ENCODE measurements at regions of chr1 and their contacts with region 1.

Region 1: DNA sequence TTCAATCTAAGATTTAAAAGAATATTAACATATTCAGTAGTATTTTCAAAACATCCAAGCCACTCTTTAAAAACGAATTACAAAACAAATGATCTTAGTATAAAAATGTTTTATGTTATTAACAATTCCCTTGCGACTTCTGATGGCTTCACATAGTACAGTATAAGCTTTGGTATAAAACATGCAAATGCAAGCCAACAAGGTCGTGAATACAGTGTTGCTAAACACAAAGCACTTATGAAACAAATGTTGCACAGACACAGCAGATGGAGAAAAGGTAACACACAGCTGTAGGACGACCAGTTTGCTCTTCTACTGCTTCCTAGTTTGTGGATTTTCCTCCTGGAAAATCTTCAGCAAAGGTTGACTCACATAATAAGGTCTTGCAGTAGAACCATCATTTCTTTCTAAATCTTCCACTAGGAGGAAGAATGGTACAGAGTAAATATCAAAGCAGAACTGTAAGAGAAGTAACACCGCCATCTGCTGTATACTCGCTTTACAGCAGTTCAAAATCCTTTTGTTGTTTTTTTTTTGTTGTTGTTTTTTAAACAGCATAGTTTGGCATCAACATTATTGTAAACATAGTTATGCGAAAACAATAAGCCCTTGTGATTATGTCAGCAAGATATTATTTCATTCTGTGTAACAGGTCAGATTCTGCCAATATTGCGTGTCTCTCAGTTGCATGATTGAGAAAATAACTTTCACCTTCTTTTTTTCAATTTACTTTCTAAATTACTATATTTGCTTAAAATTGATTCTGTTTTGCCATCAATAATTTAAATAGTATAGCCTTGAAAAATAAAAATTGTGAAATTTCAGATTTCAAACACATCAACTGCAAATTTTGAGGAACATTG is 69.5 kb downstream of the LHX8 start:
- DNase-seq: peak; percentile 6
- H3K4me3 Mint-ChIP-seq: no peak overlapping the region
- H3K27ac Mint-ChIP-seq: no peak overlapping the region
- H3K4me1 Mint-ChIP-seq: no peaks in the 10 kb centered on the region
- H3K27me3 Mint-ChIP-seq: no peaks in the 10 kb centered on the region
- CTCF ChIP-seq: peak; percentile 67

Region 2: GRCh38 chr1:74771913-74772515 is 431.6 kb before region 1 on chr1:
- CTCF ChIA-PET with region 1: interaction called, 11 read pairs
- intact Hi-C with region 1: loop called (anchors 1 kb)
- DNase-seq: peak; percentile 44
- H3K4me3 Mint-ChIP-seq: no peak overlapping the region
- H3K27ac Mint-ChIP-seq: no peak overlapping the region
- H3K4me1 Mint-ChIP-seq: no peaks in the 10 kb centered on the region
- H3K27me3 Mint-ChIP-seq: no peaks in the 10 kb centered on the region
- CTCF ChIP-seq: peak; percentile 53

Region 3: GRCh38 chr1:74964508-74965102 is 239.0 kb before region 1 on chr1:
- CTCF ChIA-PET with region 1: no interaction called
- intact Hi-C with region 1: loop called (anchors 10 kb)
- DNase-seq: peak; percentile 46
- H3K4me3 Mint-ChIP-seq: no peak overlapping the region
- H3K27ac Mint-ChIP-seq: no peak overlapping the region
- H3K4me1 Mint-ChIP-seq: no peaks in the 10 kb centered on the region
- H3K27me3 Mint-ChIP-seq: no peaks in the 10 kb centered on the region
- CTCF ChIP-seq: no peak

Region 4: DNA sequence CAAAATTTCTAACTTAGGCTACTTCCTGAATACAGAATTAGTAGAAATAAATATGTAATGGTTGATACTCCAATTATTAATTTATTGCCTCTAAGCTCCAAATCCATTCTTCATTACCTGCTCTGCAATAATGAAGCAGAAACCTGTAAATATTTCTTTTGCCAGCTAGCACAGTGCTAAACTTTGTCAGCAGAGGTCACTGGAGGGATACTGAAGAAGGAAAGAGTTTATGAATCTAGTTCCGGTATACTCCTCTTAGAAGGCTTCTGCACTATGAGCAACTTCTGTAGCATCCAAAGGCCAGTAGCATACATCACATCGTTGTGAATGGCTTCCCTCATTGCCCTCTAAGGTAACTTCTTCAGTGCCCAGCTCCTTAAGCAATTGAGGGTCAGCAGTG is 150.4 kb before region 1 on chr1:
- CTCF ChIA-PET with region 1: no interaction called
- intact Hi-C with region 1: loop called (anchors 1 kb)
- DNase-seq: no peak
- H3K4me3 Mint-ChIP-seq: no peak overlapping the region
- H3K27ac Mint-ChIP-seq: no peak overlapping the region
- H3K4me1 Mint-ChIP-seq: no peaks in the 10 kb centered on the region
- H3K27me3 Mint-ChIP-seq: no peaks in the 10 kb centered on the region
- CTCF ChIP-seq: no peak

Region 5: DNA sequence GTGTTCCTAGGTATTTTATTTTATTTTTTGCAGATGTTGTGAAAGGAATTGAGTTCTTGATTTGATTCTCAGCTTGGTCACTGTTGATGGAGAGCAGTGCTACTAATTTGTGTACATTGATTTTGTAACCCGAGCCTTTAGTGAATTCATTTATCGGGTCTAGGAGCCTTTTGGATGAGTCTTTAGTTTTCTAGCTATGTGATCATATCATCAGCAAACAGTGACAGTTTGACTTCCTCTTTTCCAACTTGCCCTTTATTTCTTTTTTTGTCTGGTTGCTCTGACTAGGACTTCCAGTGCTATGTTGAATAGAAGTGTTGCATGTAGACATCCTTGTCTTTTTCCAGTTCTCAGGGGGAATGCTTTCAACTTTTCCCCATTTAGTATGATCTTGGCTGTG is 69.5 kb after region 1 on chr1:
- CTCF ChIA-PET with region 1: no interaction called
- intact Hi-C with region 1: no loop called
- DNase-seq: no peak
- H3K4me3 Mint-ChIP-seq: no peak overlapping the region
- H3K27ac Mint-ChIP-seq: no peak overlapping the region
- H3K4me1 Mint-ChIP-seq: no peaks in the 10 kb centered on the region
- H3K27me3 Mint-ChIP-seq: no peaks in the 10 kb centered on the region
- CTCF ChIP-seq: no peak